ENCODE measurements at regions of chr2 and their contacts with region 1.

Region 1: GRCh38 chr2:39696838-39697237 is 31.1 kb downstream of the TMEM178A start:
- DNase-seq: no peak
- H3K4me3 ChIP-seq: peak overlapping the region in 1 of 2 donors; percentile 18
- H3K27ac ChIP-seq: peak overlapping the region; percentile 41 to 72
- H3K4me1 ChIP-seq: peaks cover 3 to 14% of the 10 kb centered on the region in 2 donors
- H3K27me3 ChIP-seq: no peaks in the 10 kb centered on the region
- CTCF ChIP-seq: peak; percentile 28 to 45 (median 41)

Region 2: GRCh38 chr2:39379643-39380524 is 317.0 kb before region 1 on chr2:
- intact Hi-C with region 1: loop called (anchors 5 kb)
- DNase-seq: no peak
- H3K4me3 ChIP-seq: no peak overlapping the region
- H3K27ac ChIP-seq: peak overlapping the region; percentile 24 to 26
- H3K4me1 ChIP-seq: peaks cover 4 to 33% of the 10 kb centered on the region in 2 donors
- H3K27me3 ChIP-seq: no peaks in the 10 kb centered on the region
- CTCF ChIP-seq: peak; percentile 33 to 61 (median 40)

Region 3: DNA sequence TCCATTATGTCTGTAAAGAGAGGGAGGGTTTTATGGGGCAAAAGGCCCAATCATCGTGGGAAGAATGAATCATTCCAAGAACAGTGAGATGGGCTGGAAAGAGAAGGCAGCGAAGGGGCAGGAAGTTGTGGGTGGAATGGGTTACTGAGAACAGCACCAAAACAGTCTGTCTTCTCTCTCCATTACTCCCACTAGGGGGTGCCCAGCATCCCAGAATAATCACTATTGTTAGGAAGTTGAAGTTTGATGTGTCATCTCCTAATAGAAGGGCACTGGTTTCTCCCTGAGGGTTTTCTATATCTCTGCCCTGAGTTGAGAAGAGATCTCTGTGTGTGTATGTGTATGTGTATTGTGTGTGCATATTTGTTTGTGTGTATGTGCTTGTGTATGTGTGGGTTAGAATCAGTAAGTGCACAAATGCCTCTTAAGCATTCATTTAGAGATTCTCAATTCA is 183.2 kb before region 1 on chr2:
- intact Hi-C with region 1: loop called (anchors 1 kb)
- DNase-seq: peak in 1 of 2 donors; percentile 91
- H3K4me3 ChIP-seq: no peak overlapping the region
- H3K27ac ChIP-seq: peak overlapping the region; percentile 43 to 69
- H3K4me1 ChIP-seq: peaks cover 12 to 37% of the 10 kb centered on the region in 2 donors
- H3K27me3 ChIP-seq: no peaks in the 10 kb centered on the region
- CTCF ChIP-seq: peak; percentile 52 to 61 (median 60)

Region 4: GRCh38 chr2:39593439-39594393 is 103.1 kb before region 1 on chr2:
- intact Hi-C with region 1: loop called (anchors 5 kb)
- DNase-seq: no peak
- H3K4me3 ChIP-seq: no peak overlapping the region
- H3K27ac ChIP-seq: no peak overlapping the region
- H3K4me1 ChIP-seq: no peaks in the 10 kb centered on the region
- H3K27me3 ChIP-seq: no peaks in the 10 kb centered on the region
- CTCF ChIP-seq: peak; percentile 44 to 69 (median 48)

Region 5: DNA sequence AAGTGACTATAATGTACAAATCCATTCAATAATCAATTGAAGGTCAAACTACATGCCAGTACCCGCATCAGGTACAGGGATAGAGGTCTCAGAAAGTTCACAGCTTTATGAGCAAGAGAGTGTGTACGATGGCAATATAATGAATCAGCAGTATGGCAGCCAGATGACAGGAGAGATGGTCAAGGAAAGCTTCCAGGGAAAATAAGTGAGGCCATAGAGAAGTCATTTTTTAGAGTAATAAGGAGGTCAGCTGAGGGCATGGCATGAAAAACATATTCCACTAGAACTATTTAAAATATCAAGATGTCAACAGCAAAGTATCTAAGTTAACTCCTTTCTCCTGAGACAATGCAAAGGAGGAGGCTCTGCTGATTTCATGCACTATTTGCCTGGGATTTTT is 647.1 kb after region 1 on chr2:
- intact Hi-C with region 1: no loop called
- DNase-seq: no peak
- H3K4me3 ChIP-seq: no peak overlapping the region
- H3K27ac ChIP-seq: no peak overlapping the region
- H3K4me1 ChIP-seq: peaks cover 0 to 16% of the 10 kb centered on the region in 2 donors
- H3K27me3 ChIP-seq: no peaks in the 10 kb centered on the region
- CTCF ChIP-seq: no peak

Region 6: DNA sequence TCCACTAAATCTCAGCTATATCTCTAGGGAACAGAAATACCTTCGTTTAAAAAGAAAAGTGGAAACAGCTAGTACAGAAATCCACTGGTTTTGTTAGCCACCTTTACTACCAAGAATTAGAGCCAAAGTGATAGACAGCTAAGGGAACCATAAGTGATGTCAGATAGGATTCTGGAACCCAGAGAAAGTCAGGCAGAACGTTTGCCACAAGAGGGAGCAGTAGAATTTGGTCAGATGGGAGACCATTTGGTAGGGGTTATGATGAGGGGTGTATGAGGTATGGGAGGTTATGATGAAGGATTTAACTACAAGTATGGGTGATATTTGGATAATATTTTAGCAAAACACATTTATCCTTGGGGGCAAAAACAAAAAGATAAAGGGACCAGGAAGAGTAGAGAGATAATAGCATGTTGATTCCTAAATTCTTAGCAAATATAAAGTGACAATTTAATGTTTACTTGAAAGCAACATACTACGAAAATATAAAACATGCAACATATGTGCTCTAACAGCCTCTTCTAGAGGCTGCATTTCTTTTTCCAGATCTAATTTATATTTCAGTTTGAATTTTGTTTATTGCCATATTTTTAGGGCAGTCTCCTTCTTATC is 751.7 kb after region 1 on chr2:
- intact Hi-C with region 1: no loop called
- DNase-seq: no peak
- H3K4me3 ChIP-seq: no peak overlapping the region
- H3K27ac ChIP-seq: no peak overlapping the region
- H3K4me1 ChIP-seq: peaks cover 2 to 7% of the 10 kb centered on the region in 2 donors
- H3K27me3 ChIP-seq: no peaks in the 10 kb centered on the region
- CTCF ChIP-seq: peak; percentile 14 to 52 (median 14)